AG04450 (cell line): ENCODE measurements at regions of chr4 and their contacts with region 1.

Region 1: GRCh38 chr4:39527273-39528060 is at the start of gene UGDH:
- DNase-seq: peak; percentile 98
- H3K4me3 ChIP-seq: peak within 1 kb of the TSS; percentile 92
- H3K27ac ChIP-seq: peak within 1 kb of the TSS; percentile 97
- H3K27me3 ChIP-seq: no peaks in the 10 kb centered on the region
- CTCF ChIP-seq: no peak
- polyA plus RNA-seq, gene UGDH: 87.8 and 117 TPM in 2 replicates

Region 2: GRCh38 chr4:39476187-39476895 is 51.1 kb before region 1 on chr4:
- CTCF ChIA-PET with region 1: no interaction called
- POLR2A ChIA-PET with region 1: no interaction called
- DNase-seq: no peak
- H3K4me3 ChIP-seq: no peak overlapping the region
- H3K27ac ChIP-seq: no peak overlapping the region
- H3K27me3 ChIP-seq: no peaks in the 10 kb centered on the region
- CTCF ChIP-seq: no peak

Region 3: DNA sequence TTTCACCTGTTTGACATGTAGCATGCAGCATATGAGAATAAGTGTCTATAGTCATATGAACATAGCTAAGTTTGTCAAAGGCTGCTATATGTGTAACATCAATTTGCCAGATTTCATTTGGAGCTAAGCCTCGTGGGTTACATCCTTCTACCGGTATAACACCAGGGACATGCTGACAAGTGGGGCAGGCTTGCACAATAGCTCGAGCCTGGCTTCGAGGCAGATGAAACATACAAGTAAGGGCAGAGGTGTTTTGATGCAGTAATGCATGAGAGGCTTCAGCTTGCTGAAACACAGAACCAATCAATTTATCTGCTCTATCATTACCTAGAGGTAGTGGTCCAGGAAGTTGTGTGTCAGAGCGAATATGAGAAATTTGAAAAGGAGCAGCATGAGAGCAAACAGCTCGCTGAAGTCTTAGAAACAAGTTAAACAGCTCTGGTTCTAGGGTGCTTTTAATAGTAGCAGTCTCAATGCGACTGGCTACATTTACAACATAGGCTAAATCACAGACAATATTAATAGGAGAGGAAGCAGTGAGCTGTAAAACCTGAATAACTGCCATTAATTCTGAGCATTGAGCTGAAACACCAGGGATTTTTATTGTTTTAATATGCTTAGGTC is 14.6 kb after region 1 on chr4:
- CTCF ChIA-PET with region 1: no interaction called
- POLR2A ChIA-PET with region 1: interaction called, 20 read pairs
- DNase-seq: no peak
- H3K4me3 ChIP-seq: no peak overlapping the region
- H3K27ac ChIP-seq: no peak overlapping the region
- H3K27me3 ChIP-seq: no peaks in the 10 kb centered on the region
- CTCF ChIP-seq: no peak

Region 4: GRCh38 chr4:39559626-39560025 is 32.2 kb after region 1 on chr4:
- CTCF ChIA-PET with region 1: no interaction called
- POLR2A ChIA-PET with region 1: interaction called, 54 read pairs
- DNase-seq: no peak
- H3K4me3 ChIP-seq: no peak overlapping the region
- H3K27ac ChIP-seq: no peak overlapping the region
- H3K27me3 ChIP-seq: no peaks in the 10 kb centered on the region
- CTCF ChIP-seq: no peak

Region 5: GRCh38 chr4:39609454-39609931 is 82.0 kb after region 1 on chr4:
- CTCF ChIA-PET with region 1: no interaction called
- POLR2A ChIA-PET with region 1: interaction called, 11 read pairs
- DNase-seq: no peak
- H3K4me3 ChIP-seq: no peak overlapping the region
- H3K27ac ChIP-seq: no peak overlapping the region
- H3K27me3 ChIP-seq: no peaks in the 10 kb centered on the region
- CTCF ChIP-seq: no peak

Region 6: DNA sequence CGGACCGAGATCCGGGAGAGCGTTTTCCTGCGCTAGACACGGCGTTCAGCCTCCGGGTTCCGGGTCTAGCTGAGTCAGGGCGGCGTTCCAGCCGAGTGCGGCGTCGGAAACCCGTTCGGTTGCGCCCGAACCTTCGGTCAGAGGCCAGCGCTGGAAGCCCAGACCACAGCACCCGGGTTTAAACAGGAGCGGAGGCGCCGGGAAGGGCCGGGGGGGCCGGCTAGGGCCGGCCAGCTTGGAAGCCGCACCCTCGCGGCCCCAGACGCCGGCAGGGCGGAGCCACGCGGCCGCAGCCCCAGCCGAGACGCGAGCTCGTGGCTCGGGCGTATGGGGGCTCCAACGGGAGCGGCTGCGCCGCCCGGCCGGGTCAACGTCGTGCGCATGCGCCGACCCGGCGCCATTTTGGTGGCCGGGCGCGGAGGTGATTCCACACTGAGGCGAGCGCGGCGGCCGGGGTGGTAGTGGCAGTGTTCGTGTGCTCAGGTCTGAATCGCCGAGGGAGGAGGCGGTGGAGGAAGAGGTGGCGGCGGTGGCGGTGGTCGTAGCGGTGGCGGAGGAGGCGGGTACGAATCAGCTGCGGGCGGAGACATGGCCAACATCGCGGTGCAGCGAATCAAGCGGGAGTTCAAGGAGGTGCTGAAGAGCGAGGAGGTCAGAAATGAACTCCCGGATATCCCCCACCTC is 170.4 kb after region 1 on chr4 and contains the start of gene UBE2K:
- CTCF ChIA-PET with region 1: no interaction called
- POLR2A ChIA-PET with region 1: interaction called, 13 read pairs
- DNase-seq: no peak
- H3K4me3 ChIP-seq: peak within 1 kb of the TSS; percentile 96
- H3K27ac ChIP-seq: peak within 1 kb of the TSS; percentile 81
- H3K27me3 ChIP-seq: no peaks in the 10 kb centered on the region
- CTCF ChIP-seq: no peak
- polyA plus RNA-seq, gene UBE2K: 79.3 and 101 TPM in 2 replicates

Region 7: DNA sequence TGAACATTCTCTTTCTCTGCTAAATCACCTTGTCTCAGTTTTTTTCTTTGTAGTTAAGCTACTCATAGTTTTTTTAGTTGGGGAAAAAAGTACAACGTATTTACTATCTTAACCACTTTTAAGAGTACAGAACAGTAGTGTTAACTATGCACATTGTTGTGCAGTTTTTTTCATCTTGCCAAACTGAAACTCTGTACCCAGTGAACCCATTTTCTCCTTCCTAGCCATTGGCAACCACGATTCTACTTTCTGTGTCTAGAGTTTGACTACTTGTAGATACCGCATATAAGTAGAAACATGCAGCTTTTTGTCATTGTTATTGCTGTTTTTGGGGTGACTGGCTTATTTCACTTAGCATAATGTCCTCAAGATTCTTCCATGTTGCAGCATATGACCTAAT is 539.2 kb after region 1 on chr4:
- CTCF ChIA-PET with region 1: no interaction called
- POLR2A ChIA-PET with region 1: no interaction called
- DNase-seq: no peak
- H3K4me3 ChIP-seq: no peak overlapping the region
- H3K27ac ChIP-seq: no peak overlapping the region
- H3K27me3 ChIP-seq: no peaks in the 10 kb centered on the region
- CTCF ChIP-seq: no peak